Psoas muscle (tissue), 8 donors: ENCODE measurements at regions of chr9 and their contacts with region 1.

Region 1: DNA sequence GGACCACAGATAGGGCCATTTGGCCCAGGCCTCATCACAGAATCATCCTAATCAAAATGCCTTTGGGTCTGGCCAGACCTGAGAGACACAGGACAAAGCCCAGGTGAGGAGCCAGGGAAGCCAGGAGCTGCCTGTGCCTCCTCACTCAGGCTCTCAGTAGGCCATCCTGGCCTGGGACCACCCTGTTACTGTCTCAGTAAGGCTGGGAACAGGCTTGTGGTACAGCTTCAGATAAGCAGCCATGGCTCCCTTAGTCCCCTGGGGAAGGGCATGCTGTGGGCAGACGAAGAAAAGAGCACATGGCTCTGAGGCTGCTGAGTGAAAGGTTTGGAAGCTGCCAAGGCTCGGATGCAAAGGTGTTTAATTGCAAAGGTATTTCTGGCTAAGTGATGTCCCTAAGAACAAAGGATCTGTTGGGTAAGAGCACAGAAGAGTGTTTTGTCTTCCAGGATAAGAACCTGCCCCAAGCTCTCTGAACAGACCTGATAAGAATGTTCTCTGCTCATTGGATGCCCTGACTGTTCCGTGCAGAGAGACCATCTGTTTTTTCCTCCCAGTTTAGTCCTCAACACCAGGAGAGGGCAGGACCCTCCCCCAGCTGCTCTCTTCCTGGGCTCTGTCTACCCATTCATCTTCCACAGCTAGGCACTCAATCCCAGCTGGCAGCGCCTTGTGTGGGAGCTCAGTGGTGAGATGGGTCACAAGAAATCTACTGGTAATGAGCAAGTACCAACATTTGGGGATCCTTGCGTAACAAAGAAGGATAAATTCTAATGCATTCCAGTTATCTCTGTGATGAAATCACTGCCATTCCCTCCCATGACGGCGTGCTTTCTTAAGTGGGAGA is 17.7 kb downstream of the ANGPTL2 start:
- DNase-seq: no peak
- ATAC-seq: peak in 1 of 4 donors; percentile 39
- H3K4me3 ChIP-seq: no peak overlapping the region
- H3K27ac ChIP-seq: peak overlapping the region; percentile 9
- H3K4me1 ChIP-seq: peaks cover 15% of the 10 kb centered on the region
- H3K27me3 ChIP-seq: no peaks in the 10 kb centered on the region
- CTCF ChIP-seq: no peak

Region 2: DNA sequence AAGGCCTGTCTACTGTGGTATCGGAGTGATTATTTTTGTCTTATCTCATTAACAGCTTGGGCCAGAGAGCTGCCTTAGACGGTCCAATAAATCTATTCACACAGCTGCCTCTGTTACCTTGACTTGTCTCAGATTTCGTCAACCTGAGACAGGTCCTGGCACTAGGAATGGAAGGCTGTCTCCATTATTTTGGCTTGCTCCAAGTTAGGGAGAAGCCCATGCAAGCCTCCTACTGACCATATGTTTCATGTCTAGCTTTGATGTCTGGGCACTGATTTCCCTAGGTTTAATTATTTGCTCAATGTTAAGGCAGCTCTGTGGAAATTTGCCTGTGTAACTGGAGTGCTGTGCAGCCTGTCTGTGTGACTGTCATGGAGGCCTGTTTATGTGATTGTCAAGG is 202.5 kb before region 1 on chr9:
- intact Hi-C with region 1: no loop called
- DNase-seq: no peak
- ATAC-seq: no peak
- H3K4me3 ChIP-seq: no peak overlapping the region
- H3K27ac ChIP-seq: no peak overlapping the region
- H3K4me1 ChIP-seq: no peaks in the 10 kb centered on the region
- H3K27me3 ChIP-seq: no peaks in the 10 kb centered on the region
- CTCF ChIP-seq: no peak

Region 3: DNA sequence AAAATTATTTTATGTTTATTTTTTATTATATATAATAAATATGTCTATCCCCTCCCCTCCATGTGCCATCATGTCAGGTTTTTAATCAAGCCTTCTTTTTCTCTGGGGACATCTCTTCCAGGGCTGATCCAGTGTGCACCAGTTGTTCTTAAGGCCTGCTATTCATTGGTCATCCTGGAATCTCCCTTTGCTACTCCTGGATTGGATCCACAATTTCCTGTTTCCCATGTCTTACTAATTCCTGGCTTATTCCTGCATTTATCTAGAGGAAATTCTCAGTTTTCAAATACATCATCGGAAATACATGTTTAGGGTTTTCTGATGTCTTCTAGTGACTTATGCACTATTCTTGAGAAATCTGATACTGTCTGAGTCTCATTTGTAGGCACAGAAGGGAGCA is 39.1 kb before region 1 on chr9:
- intact Hi-C with region 1: no loop called
- DNase-seq: no peak
- ATAC-seq: no peak
- H3K4me3 ChIP-seq: no peak overlapping the region
- H3K27ac ChIP-seq: no peak overlapping the region
- H3K4me1 ChIP-seq: no peaks in the 10 kb centered on the region
- H3K27me3 ChIP-seq: no peaks in the 10 kb centered on the region
- CTCF ChIP-seq: no peak

Region 4: GRCh38 chr9:127087836-127088235 is 16.9 kb before region 1 on chr9:
- intact Hi-C with region 1: loop called in 1 of 2 experiments (anchors 2 kb)
- DNase-seq: no peak
- ATAC-seq: no peak
- H3K4me3 ChIP-seq: no peak overlapping the region
- H3K27ac ChIP-seq: no peak overlapping the region
- H3K4me1 ChIP-seq: peaks cover 9% of the 10 kb centered on the region
- H3K27me3 ChIP-seq: no peaks in the 10 kb centered on the region
- CTCF ChIP-seq: no peak

Region 5: DNA sequence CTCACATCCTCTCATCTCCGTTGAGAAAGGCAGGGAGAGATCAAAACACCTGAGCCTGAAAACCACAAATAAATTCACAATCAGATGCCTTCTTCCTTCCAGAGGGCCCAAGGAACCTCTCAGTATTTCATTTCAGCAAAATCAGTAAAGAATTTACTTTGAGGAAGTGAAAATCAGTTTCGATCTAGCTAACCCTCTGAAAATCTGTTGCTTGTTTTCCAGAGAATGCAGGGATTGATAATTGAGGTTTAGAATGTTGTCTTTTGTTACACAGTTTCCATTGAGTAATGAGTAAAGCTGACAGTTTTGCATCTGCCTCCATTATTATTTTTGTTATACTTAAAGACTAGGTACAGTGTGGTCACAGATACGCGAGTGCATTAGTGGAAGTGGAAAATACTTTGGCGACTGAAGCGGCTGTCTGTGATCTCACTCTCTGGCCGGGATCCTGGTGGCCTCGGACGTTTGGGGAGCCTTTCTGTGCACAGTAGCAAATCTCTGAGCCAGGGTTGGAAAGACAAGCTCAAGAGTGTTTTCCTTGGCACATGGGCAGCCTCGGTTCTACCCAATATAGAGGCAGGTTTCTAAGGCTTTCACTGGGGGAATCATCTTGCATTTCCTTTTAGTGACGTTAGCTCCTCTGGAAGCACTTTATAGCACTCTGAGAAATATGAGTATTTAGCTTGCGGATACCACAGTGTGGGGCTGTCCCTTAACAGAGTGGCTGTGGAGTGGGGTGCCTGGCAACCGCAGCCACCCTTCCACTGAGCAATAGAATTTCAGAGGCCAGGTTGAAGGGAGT is 49.9 kb after region 1 on chr9:
- intact Hi-C with region 1: no loop called
- DNase-seq: peak; percentile 71 to 78
- ATAC-seq: peak; percentile 12 to 69 (median 42)
- H3K4me3 ChIP-seq: peak overlapping the region; percentile 29
- H3K27ac ChIP-seq: peak overlapping the region; percentile 76
- H3K4me1 ChIP-seq: peaks cover 29% of the 10 kb centered on the region
- H3K27me3 ChIP-seq: no peaks in the 10 kb centered on the region
- CTCF ChIP-seq: no peak